HEK293 (cell line): ENCODE measurements at regions of chr6 and their contacts with region 1.

Region 1: DNA sequence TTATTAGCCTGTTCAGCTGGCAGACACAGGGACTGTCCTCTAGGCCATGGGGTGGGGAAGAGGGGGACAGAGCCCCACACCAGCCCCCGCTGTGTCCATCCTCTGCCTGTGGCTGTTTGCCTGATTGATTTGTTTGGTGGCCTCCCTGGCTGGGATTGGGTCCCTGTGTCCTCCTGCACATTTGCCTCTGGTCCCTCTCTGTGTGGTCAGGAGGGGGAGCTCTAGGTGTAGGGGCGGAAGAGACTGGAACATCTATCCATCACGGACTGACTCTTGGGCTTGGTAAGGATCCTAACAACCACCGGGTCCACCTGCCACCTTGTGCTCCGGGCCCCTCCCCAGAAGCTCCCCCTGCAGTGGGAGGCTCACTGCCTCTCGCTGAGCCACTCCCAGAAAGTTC is 38.4 kb upstream of the CCDC167 start:
- H3K4me3 ChIP-seq: no peak overlapping the region
- H3K27ac ChIP-seq: no peak overlapping the region
- H3K4me1 ChIP-seq: peaks cover 3% of the 10 kb centered on the region; the same call in 1 of the 2 replicates
- CTCF ChIP-seq: peak; percentile 75

Region 2: GRCh38 chr6:37289931-37290330 is 248.2 kb before region 1 on chr6:
- CTCF ChIA-PET with region 1: no interaction called
- POLR2A ChIA-PET with region 1: no interaction called
- H3K4me3 ChIP-seq: no peak overlapping the region
- H3K27ac ChIP-seq: no peak overlapping the region
- H3K4me1 ChIP-seq: no peaks in the 10 kb centered on the region
- CTCF ChIP-seq: no peak

Region 3: DNA sequence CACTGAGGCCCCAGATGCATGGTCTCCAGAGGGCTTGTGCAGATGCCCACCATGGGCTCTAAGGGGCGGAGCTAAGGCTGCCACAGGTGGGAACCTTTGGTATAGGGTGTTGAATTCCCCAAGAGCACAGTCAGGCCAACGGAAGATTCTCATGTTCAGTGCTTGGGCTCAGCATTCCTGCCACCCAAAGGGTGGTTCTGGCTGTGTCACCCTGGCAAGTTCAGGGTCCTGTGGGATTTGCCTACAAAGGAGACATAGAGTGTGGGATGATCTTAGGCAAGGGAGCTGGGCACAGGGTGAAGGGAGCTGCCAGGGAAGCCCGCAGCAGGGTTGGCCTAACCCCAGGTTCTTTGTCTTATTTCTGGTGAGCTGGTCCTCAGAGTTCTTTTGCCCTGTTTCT is 65.6 kb before region 1 on chr6:
- CTCF ChIA-PET with region 1: no interaction called
- POLR2A ChIA-PET with region 1: no interaction called
- H3K4me3 ChIP-seq: no peak overlapping the region
- H3K27ac ChIP-seq: no peak overlapping the region
- H3K4me1 ChIP-seq: no peaks in the 10 kb centered on the region
- CTCF ChIP-seq: no peak

Region 4: DNA sequence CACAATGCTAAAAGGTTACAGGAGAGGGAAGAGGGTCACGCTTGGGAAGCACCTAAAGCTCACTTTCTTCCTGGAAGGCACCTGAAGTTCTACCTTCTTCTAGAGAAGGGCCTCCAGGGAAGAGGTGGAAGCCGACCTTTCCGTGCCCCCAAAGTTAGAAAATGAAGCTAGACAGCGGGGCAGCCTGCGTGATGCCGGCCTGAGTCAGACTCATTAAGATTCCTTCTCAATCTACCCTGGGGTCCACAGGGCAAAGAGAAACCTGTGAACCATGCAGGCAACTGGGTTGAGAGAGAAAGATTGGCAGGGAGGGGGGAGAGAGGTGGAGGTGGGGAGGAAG is 16.3 kb after region 1 on chr6:
- CTCF ChIA-PET with region 1: interaction called, 11 read pairs
- POLR2A ChIA-PET with region 1: interaction called, 4 read pairs
- H3K4me3 ChIP-seq: no peak overlapping the region
- H3K27ac ChIP-seq: no peak overlapping the region
- H3K4me1 ChIP-seq: no peaks in the 10 kb centered on the region; the same call in 1 of the 2 replicates
- CTCF ChIP-seq: no peak

Region 5: GRCh38 chr6:37559501-37559900 is 21.4 kb after region 1 on chr6:
- CTCF ChIA-PET with region 1: interaction called, 110 read pairs
- POLR2A ChIA-PET with region 1: interaction called, 4 read pairs
- H3K4me3 ChIP-seq: no peak overlapping the region
- H3K27ac ChIP-seq: no peak overlapping the region
- H3K4me1 ChIP-seq: no peaks in the 10 kb centered on the region
- CTCF ChIP-seq: no peak

Region 6: GRCh38 chr6:37566111-37566949 is 28.2 kb after region 1 on chr6:
- CTCF ChIA-PET with region 1: interaction called, 110 read pairs
- POLR2A ChIA-PET with region 1: interaction called, 3 read pairs
- H3K4me3 ChIP-seq: no peak overlapping the region
- H3K27ac ChIP-seq: no peak overlapping the region
- H3K4me1 ChIP-seq: no peaks in the 10 kb centered on the region
- CTCF ChIP-seq: peak; percentile 90

Region 7: DNA sequence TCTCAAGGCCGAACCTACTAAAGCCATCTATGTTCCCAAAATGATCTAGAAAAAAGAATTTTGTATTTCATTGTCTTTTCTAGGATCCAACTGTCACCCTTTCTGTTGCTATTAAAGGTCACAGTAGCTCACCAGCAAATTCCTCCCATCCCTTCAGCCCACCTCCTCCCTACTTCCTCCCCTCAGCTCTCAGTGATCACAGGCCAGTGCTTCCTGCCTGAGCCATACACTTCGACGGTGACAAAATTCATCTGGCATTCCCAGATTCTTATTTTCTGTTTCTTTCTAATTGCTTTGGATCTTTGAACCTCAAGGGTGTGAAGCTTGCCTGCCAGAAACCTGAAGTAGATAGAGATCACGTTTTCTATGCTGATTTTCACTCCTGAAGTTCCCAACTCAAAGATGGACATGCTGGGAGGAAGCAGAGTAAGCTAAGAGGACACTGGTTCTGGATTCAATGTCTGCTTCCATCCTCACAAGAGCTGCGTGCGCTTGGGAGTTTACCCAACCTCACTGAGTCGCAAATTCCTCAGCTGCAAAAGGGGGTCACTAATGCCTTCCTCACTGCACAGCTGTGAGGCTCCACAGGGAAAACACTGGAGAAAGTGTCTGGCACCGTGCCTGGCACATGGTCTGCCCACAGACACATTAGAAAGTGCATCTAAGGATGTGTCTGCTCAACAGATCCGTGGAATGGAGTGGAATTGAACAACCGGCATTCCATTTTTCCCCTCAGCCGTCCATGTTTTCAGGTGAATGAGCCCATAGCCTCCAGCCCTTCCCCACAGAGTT is 125.1 kb after region 1 on chr6:
- CTCF ChIA-PET with region 1: interaction called, 10 read pairs
- POLR2A ChIA-PET with region 1: no interaction called
- H3K4me3 ChIP-seq: no peak overlapping the region
- H3K27ac ChIP-seq: no peak overlapping the region
- H3K4me1 ChIP-seq: peaks cover 10% of the 10 kb centered on the region
- CTCF ChIP-seq: no peak

Region 8: GRCh38 chr6:37679539-37680476 is 141.7 kb after region 1 on chr6:
- CTCF ChIA-PET with region 1: interaction called, 12 read pairs
- POLR2A ChIA-PET with region 1: no interaction called
- H3K4me3 ChIP-seq: no peak overlapping the region
- H3K27ac ChIP-seq: no peak overlapping the region
- H3K4me1 ChIP-seq: no peaks in the 10 kb centered on the region; the same call in 1 of the 2 replicates
- CTCF ChIP-seq: no peak

Region 9: DNA sequence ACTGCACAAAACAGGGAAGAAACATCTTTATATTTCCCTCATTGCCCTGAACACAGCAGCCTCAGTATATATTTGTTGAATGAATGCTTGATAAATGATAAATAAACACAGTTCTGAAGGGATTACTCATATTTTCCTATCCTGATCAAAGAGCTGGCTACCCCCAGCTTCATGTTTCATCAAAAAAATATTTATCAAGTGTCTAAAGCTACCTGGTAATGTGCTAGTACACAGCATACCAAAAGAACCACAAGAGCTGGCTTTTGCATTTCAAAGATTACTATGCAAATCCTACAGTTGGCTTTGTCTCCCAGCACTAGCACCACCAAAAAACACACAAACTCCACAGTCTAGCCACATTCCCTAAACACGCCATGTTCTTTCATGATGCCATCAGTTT is 971.6 kb after region 1 on chr6:
- CTCF ChIA-PET with region 1: no interaction called
- POLR2A ChIA-PET with region 1: no interaction called
- H3K4me3 ChIP-seq: no peak overlapping the region
- H3K27ac ChIP-seq: no peak overlapping the region
- H3K4me1 ChIP-seq: peaks cover 17% of the 10 kb centered on the region
- CTCF ChIP-seq: no peak